ENCODE measurements at regions of chr20 and their contacts with region 1.

Region 1: GRCh38 chr20:41136680-41137613 is at the start of gene PLCG1:
- DNase-seq: peak; percentile 52 to 90 (median 73)
- ATAC-seq: peak; percentile 75 to 79 (median 76)
- H3K4me3 ChIP-seq: peak within 1 kb of the TSS; percentile 76 to 97
- H3K4me3 Mint-ChIP-seq: peak within 1 kb of the TSS; percentile 86 to 90 (median 89)
- H3K27ac ChIP-seq: peak within 1 kb of the TSS; percentile 76
- H3K27ac Mint-ChIP-seq: peak within 1 kb of the TSS; percentile 95 to 97
- H3K4me1 ChIP-seq: peaks cover 46 to 66% of the 10 kb centered on the region in 2 experiments
- H3K4me1 Mint-ChIP-seq: peaks cover 63 to 66% (median 64%) of the 10 kb centered on the region in 3 donors
- H3K27me3 ChIP-seq: no peaks in the 10 kb centered on the region
- H3K27me3 Mint-ChIP-seq: no peaks in the 10 kb centered on the region
- total RNA-seq, gene PLCG1: 390 to 589 (median 444) TPM

Region 2: GRCh38 chr20:41154436-41155176 is 17.7 kb after region 1 on chr20:
- CTCF ChIA-PET with region 1: interaction called, 25 to 43 read pairs
- POLR2A ChIA-PET with region 1: interaction called, 5 to 16 read pairs
- DNase-seq: no peak
- ATAC-seq: no peak
- H3K4me3 ChIP-seq: peak overlapping the region in 1 of 2 donors; percentile 29
- H3K4me3 Mint-ChIP-seq: peak overlapping the region in 1 of 3 donors; percentile 90
- H3K27ac ChIP-seq: peak overlapping the region; percentile 90
- H3K27ac Mint-ChIP-seq: peak overlapping the region; percentile 97 to 100
- H3K4me1 ChIP-seq: peaks cover 88 to 100% of the 10 kb centered on the region in 2 experiments
- H3K4me1 Mint-ChIP-seq: peaks cover 96 to 100% (median 97%) of the 10 kb centered on the region in 3 donors
- H3K27me3 ChIP-seq: no peaks in the 10 kb centered on the region
- H3K27me3 Mint-ChIP-seq: peaks cover 0 to 2% of the 10 kb centered on the region in 2 donors

Region 3: GRCh38 chr20:41161886-41162285 is 24.9 kb after region 1 on chr20:
- CTCF ChIA-PET with region 1: interaction called, 25 to 43 read pairs
- POLR2A ChIA-PET with region 1: interaction called, 4 to 16 read pairs
- DNase-seq: peak in 3 of 35 experiments; percentile 16 to 39 (median 28)
- ATAC-seq: no peak
- H3K4me3 ChIP-seq: no peak overlapping the region
- H3K4me3 Mint-ChIP-seq: peak overlapping the region in 2 of 3 donors; percentile 58 to 61
- H3K27ac ChIP-seq: peak overlapping the region; percentile 90
- H3K27ac Mint-ChIP-seq: peak overlapping the region; percentile 92 to 97
- H3K4me1 ChIP-seq: peaks cover 39 to 86% of the 10 kb centered on the region in 2 experiments
- H3K4me1 Mint-ChIP-seq: peaks cover 76 to 82% (median 76%) of the 10 kb centered on the region in 3 donors
- H3K27me3 ChIP-seq: no peaks in the 10 kb centered on the region
- H3K27me3 Mint-ChIP-seq: peaks cover 0 to 2% of the 10 kb centered on the region in 2 donors

Region 4: GRCh38 chr20:41173161-41173721 is 36.3 kb after region 1 on chr20:
- CTCF ChIA-PET with region 1: interaction called, 4 to 11 read pairs
- POLR2A ChIA-PET with region 1: interaction called in 1 of 2 experiments, 3 read pairs
- DNase-seq: peak in 34 of 35 experiments; percentile 20 to 77 (median 54)
- ATAC-seq: peak; percentile 78 to 92 (median 79)
- H3K4me3 ChIP-seq: no peak overlapping the region
- H3K4me3 Mint-ChIP-seq: no peak overlapping the region
- H3K27ac ChIP-seq: peak overlapping the region; percentile 15
- H3K27ac Mint-ChIP-seq: peak overlapping the region; percentile 65 to 79
- H3K4me1 ChIP-seq: peaks cover 0 to 37% of the 10 kb centered on the region in 2 experiments
- H3K4me1 Mint-ChIP-seq: peaks cover 18 to 35% (median 27%) of the 10 kb centered on the region in 3 donors
- H3K27me3 ChIP-seq: no peaks in the 10 kb centered on the region
- H3K27me3 Mint-ChIP-seq: no peaks in the 10 kb centered on the region

Region 5: GRCh38 chr20:41232973-41233926 is 96.3 kb after region 1 on chr20:
- CTCF ChIA-PET with region 1: interaction called, 18 to 57 read pairs
- POLR2A ChIA-PET with region 1: interaction called in 1 of 2 experiments, 4 read pairs
- DNase-seq: no peak
- ATAC-seq: no peak
- H3K4me3 ChIP-seq: no peak overlapping the region
- H3K4me3 Mint-ChIP-seq: peak overlapping the region in 1 of 3 donors; percentile 59
- H3K27ac ChIP-seq: no peak overlapping the region
- H3K27ac Mint-ChIP-seq: no peak overlapping the region
- H3K4me1 ChIP-seq: peaks cover 11 to 17% of the 10 kb centered on the region in 2 experiments
- H3K4me1 Mint-ChIP-seq: peaks cover 22 to 31% (median 24%) of the 10 kb centered on the region in 3 donors
- H3K27me3 ChIP-seq: no peaks in the 10 kb centered on the region
- H3K27me3 Mint-ChIP-seq: no peaks in the 10 kb centered on the region

Region 6: DNA sequence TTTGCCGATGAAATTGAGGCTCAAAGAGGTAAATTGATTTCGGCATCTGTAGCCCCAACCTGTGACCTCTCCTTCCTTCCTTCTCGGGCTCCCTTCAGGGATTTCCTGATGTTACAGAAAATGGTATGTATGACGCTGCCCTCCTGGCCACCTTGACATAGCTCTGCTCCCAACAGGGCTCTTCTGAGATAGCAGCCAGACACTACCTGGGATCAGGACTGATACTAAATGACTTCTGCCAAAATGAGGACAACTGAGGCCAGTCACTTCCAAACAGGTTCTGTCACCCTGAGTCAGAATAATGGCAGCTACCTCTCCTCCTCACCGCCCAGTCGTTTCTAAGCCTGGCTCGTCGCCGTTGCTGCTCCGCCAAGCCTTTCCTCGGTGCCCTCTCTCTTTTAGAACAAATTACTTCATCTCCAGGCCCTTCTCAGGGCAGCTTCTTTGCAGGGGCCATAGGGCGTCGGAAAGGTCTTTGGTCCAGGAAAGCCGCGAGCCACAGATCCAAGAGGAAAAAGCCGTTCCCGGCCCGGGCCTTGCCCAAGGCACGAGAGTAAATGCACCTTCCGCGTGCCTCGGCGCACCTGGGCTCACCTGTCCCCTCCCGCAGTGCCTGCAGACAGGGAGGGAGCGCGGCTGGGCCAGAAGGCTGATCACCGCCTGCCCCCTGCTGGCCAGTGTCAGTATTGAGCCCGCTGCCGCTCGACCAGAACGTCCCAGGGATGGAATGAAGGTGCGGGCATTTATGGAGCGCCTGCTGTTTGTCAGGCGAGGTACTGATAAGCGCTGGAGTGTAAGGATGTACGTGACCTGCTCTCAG is 202.8 kb after region 1 on chr20:
- CTCF ChIA-PET with region 1: interaction called, 6 to 12 read pairs
- POLR2A ChIA-PET with region 1: no interaction called
- DNase-seq: peak; percentile 49 to 90 (median 78)
- ATAC-seq: peak; percentile 90 to 94 (median 94)
- H3K4me3 ChIP-seq: peak overlapping the region; percentile 22 to 57
- H3K4me3 Mint-ChIP-seq: peak overlapping the region; percentile 67 to 82 (median 73)
- H3K27ac ChIP-seq: no peak overlapping the region
- H3K27ac Mint-ChIP-seq: peak overlapping the region; percentile 24 to 46
- H3K4me1 ChIP-seq: peaks cover 4 to 14% of the 10 kb centered on the region in 2 experiments
- H3K4me1 Mint-ChIP-seq: peaks cover 8 to 11% (median 10%) of the 10 kb centered on the region in 3 donors
- H3K27me3 ChIP-seq: peaks cover 5 to 18% of the 10 kb centered on the region in 2 experiments
- H3K27me3 Mint-ChIP-seq: peaks cover 6 to 11% of the 10 kb centered on the region in 2 donors